ENCODE measurements at regions of chr1 and their contacts with region 1.

Region 1: GRCh38 chr1:155172732-155173477 is at the start of gene KRTCAP2:
- DNase-seq: peak; percentile 97
- H3K4me3 ChIP-seq: peak within 1 kb of the TSS; percentile 86
- H3K27ac ChIP-seq: peak within 1 kb of the TSS; percentile 90
- H3K4me1 ChIP-seq: peaks cover 24% of the 10 kb centered on the region
- H3K27me3 ChIP-seq: no peaks in the 10 kb centered on the region
- CTCF ChIP-seq: peak; percentile 99
- total RNA-seq, gene KRTCAP2: 162 and 179 TPM in 2 replicates

Region 2: DNA sequence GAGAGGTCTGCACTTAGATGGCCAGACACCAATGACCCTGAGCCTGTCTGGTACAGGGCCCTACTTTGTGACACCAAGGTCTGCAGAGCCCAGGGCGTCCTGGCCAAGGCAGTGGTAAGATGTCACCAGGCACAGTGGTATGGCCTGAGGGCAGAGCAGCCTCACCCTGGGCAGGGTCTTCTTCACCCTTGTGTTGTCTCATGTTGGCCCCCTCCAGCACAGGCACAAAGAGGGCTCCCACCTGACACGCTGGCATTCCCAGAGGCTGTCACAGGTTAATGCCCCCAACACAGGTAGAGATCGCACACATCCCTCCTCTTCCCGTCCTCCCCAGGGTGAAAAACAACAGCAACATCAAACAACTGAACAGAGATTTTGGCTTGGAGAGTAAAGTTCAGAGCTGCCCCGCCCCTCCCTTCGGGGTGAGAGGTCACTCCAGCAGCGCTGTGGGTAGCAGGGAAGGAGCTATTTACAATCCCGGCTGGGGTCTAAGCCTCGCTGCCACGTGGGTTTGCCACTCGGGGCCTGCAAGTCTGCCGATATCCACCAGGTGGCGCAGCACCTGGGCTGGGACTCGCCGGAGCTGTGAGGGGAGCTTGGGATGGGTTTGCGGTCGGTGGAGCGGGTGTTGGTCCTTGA is 81.7 kb before region 1 on chr1:
- CTCF ChIA-PET with region 1: interaction called, 89 read pairs
- POLR2A ChIA-PET with region 1: no interaction called
- intact Hi-C with region 1: loop called (anchors 1 kb)
- DNase-seq: peak; percentile 91
- H3K4me3 ChIP-seq: no peak overlapping the region
- H3K27ac ChIP-seq: no peak overlapping the region
- H3K4me1 ChIP-seq: peaks cover 7% of the 10 kb centered on the region
- H3K27me3 ChIP-seq: no peaks in the 10 kb centered on the region
- CTCF ChIP-seq: peak; percentile 99

Region 3: GRCh38 chr1:155193275-155193990 is 20.5 kb after region 1 on chr1:
- CTCF ChIA-PET with region 1: interaction called, 39 read pairs
- POLR2A ChIA-PET with region 1: no interaction called
- intact Hi-C with region 1: no loop called
- DNase-seq: peak; percentile 89
- H3K4me3 ChIP-seq: peak overlapping the region; percentile 57
- H3K27ac ChIP-seq: peak overlapping the region; percentile 84
- H3K4me1 ChIP-seq: peaks cover 22% of the 10 kb centered on the region
- H3K27me3 ChIP-seq: no peaks in the 10 kb centered on the region
- CTCF ChIP-seq: peak; percentile 99

Region 4: DNA sequence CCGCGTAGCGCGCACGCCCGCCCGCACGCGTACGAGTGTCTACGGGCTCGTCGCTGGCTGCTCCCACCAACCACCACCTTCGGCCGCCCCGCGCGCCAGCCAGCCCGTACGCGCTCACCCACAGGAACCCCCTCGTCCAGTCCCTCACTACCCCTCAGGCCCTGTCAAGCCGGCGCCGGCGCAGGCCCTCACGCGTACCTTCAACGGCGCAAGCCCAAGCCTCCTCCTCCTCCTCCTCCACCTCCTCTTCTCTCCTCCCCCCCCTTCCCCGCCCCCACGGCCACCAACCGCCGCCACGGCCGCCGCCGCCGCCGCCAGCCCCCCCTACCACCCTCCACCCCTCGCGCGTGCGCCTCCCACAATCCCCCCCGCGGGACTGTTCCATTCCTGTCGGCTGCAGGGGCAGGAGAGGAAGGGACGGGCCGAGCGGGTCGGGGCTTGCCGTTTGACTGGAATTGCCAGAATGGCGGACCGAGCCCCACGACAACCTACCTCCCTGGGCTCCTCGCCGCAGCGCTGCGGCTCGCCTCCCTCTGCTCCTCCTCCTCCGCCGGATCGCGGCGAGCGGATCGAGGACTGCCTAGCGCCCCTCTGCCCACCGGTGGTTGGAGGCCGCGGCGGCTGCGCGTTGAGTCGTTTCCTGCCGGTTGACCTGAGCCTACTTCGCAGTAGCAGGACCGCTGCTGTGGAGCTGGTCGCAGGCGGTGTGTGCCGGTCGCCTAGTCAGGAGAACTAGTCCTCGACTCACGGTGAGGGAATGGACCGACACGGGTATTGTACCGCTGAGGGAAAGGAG is 389.9 kb after region 1 on chr1 and contains the start of gene ASH1L:
- CTCF ChIA-PET with region 1: no interaction called
- POLR2A ChIA-PET with region 1: no interaction called
- intact Hi-C with region 1: no loop called
- DNase-seq: peak; percentile 97
- H3K4me3 ChIP-seq: peak within 1 kb of the TSS; percentile 87
- H3K27ac ChIP-seq: peak within 1 kb of the TSS; percentile 100
- H3K4me1 ChIP-seq: peaks cover 13% of the 10 kb centered on the region
- H3K27me3 ChIP-seq: no peaks in the 10 kb centered on the region
- CTCF ChIP-seq: no peak
- total RNA-seq, gene ASH1L: 47.5 and 49.6 TPM in 2 replicates

Measured in A673 (cell line).